Heart left ventricle (tissue), 16 donors: ENCODE measurements at regions of chr20 and their contacts with region 1.

Region 1: GRCh38 chr20:41617931-41618806 is at the start of gene CHD6:
- DNase-seq: peak; percentile 100
- ATAC-seq: peak; percentile 99 to 100 (median 99)
- H3K4me3 ChIP-seq: peak within 1 kb of the TSS; percentile 60 to 95 (median 74)
- H3K27ac ChIP-seq: peak within 1 kb of the TSS; percentile 79 to 95 (median 86)
- H3K4me1 ChIP-seq: peaks cover 0 to 39% (median 30%) of the 10 kb centered on the region in 12 donors
- H3K27me3 ChIP-seq: no peaks in the 10 kb centered on the region
- CTCF ChIP-seq: peak in 2 of 12 donors; percentile 7 to 15
- POLR2A ChIP-seq: peak in 1 of 2 donors; percentile 61
- total RNA-seq, gene CHD6: 19.8 to 52.8 (median 41.4) TPM

Region 2: DNA sequence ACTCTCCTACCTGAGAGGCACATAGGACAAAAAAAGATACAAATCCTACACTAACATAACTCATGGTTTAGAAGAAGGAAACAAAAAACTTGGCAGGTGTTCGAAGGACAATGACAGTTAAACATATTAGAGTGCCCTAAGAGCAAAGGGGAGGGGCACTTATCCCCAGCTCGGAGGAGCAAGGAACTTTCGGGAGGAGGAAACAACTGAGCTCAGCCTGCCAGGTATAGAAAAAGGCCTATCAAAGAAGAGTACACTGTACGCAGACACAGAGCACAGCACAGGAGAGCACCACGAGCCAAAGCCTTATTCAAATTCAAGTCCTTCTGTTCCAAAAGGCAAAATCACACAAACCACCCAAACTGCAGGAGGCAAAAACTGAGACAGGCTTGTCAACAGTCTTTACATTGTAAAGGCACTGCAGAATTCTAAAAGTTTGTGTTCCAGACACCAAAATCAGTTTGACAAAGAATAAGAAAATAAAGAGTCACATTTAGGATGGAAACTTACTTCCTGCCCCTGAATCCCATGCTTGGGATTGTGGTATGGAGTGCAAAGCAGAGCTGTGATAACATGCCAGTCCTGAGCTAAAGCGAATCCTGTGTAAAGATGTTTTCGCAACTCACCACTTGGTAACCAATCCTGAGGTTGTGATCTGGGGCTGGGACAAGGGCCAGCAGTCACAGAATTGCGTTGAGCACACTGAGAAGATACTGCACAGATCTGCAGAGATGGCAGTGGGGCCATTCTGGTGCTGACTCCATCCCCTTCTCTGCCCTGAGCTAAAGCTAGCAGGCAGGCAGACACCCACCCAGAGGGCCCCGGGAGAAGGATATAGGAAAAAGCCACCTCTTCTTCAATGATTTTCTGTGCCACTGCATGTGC is 108.6 kb before region 1 on chr20:
- intact Hi-C with region 1: loop called in 5 of 10 experiments (anchors 5 to 10 kb)
- DNase-seq: peak in 4 of 5 donors; percentile 38 to 59 (median 50)
- ATAC-seq: peak; percentile 78 to 88 (median 81)
- H3K4me3 ChIP-seq: no peak overlapping the region
- H3K27ac ChIP-seq: peak overlapping the region in 11 of 12 donors; percentile 5 to 75 (median 38)
- H3K4me1 ChIP-seq: peaks cover 0 to 60% (median 39%) of the 10 kb centered on the region in 12 donors
- H3K27me3 ChIP-seq: no peaks in the 10 kb centered on the region
- CTCF ChIP-seq: no peak
- POLR2A ChIP-seq: no peak

Region 3: GRCh38 chr20:41524980-41525613 is 93.1 kb before region 1 on chr20:
- intact Hi-C with region 1: loop called in 1 of 10 experiments (anchors 5 kb)
- DNase-seq: peak; percentile 83 to 89 (median 84)
- ATAC-seq: peak; percentile 81 to 96 (median 94)
- H3K4me3 ChIP-seq: peak overlapping the region in 8 of 12 donors; percentile 2 to 40 (median 25)
- H3K27ac ChIP-seq: peak overlapping the region in 7 of 12 donors; percentile 9 to 50 (median 26)
- H3K4me1 ChIP-seq: peaks cover 5 to 38% (median 25%) of the 10 kb centered on the region in 12 donors
- H3K27me3 ChIP-seq: no peaks in the 10 kb centered on the region
- CTCF ChIP-seq: no peak
- POLR2A ChIP-seq: no peak

Region 4: DNA sequence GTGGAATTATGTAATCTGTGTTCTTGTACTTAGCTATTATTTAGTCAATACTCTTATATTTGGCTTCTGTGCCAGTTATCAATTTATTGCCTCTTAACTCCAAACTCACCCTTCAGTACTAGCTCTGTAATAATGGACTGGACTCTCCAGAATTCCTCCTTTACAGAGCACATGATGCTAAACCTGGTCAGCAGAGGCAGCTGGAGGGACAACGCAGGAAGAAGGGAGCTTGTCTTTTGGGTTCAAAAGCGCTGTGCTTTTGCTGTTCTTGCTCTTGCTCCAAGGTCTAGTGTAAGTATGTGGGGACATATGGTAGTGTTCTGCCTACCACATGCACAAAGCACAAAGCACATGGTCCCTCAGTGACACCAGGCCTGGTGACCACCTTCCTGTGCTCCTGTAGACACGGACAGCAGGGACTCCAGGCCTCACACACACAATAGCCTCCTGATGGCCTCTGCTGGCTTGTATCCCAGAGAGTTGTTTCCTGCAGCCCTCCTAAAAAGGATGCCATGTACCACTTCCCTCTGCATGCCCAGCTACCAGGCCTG is 46.1 kb before region 1 on chr20:
- intact Hi-C with region 1: loop called in 1 of 10 experiments (anchors 5 kb)
- DNase-seq: no peak
- ATAC-seq: peak in 3 of 4 donors; percentile 18 to 48 (median 29)
- H3K4me3 ChIP-seq: no peak overlapping the region
- H3K27ac ChIP-seq: no peak overlapping the region
- H3K4me1 ChIP-seq: peaks cover 0 to 97% (median 52%) of the 10 kb centered on the region in 12 donors
- H3K27me3 ChIP-seq: no peaks in the 10 kb centered on the region
- CTCF ChIP-seq: peak in 2 of 12 donors; percentile 7 to 23
- POLR2A ChIP-seq: no peak

Region 5: DNA sequence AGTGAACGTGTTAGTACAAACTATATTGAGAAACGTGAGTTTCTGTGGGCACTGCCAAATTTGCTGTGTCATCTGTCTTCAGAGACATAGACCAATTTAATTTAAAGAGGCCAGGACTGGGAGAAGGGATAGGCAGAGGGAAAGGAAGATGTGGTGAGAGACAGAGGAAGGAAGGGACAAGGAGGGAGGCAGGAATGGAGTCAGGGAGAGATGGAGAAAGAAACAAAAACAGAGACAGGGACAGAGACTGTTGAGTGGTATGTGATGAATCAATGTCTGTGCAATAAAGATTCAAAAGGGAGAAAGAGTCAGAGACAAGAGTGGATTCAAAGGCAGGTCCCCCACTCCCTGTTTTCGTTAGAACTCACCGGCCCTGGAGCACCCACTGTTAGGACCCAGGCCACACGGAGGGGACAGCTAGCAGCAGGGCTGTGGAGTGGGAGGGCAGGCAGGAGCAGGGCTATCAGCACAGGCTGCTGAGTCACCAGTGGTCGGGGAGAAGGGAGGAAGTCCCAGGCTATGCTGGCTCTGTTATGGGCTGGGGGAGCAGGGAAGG is 51.6 kb after region 1 on chr20:
- intact Hi-C with region 1: no loop called
- DNase-seq: no peak
- ATAC-seq: no peak
- H3K4me3 ChIP-seq: no peak overlapping the region
- H3K27ac ChIP-seq: no peak overlapping the region
- H3K4me1 ChIP-seq: no peaks in the 10 kb centered on the region
- H3K27me3 ChIP-seq: peaks cover 0 to 27% (median 0%) of the 10 kb centered on the region in 9 donors
- CTCF ChIP-seq: no peak
- POLR2A ChIP-seq: no peak